Posterior vena cava (tissue), 2 donors: ENCODE measurements at regions of chr16 and their contacts with region 1.

Region 1: GRCh38 chr16:83418565-83418964 is 389.2 kb upstream of the HSBP1 start:
- DNase-seq: no peak

Region 2: DNA sequence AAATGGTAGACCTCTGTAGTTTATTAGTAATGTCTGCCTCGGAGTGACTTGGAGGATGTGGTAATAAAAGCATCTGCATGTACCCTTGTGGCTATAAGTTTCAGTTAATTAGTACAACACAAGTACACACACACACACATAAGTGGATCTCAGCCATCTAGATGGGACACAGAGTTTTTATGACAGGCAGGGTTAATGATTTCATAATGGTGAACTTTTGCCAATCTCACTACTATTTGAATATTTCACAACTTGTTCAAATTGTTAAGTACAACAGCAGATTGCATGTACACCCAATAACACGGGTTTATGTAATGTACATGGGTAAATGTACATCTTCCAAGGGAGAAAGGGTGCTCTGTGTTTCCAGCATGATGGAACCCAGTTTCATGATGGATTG is 122.1 kb before region 1 on chr16:
- intact Hi-C with region 1: loop called in 1 of 2 experiments (anchors 5 kb)
- DNase-seq: no peak

Region 3: DNA sequence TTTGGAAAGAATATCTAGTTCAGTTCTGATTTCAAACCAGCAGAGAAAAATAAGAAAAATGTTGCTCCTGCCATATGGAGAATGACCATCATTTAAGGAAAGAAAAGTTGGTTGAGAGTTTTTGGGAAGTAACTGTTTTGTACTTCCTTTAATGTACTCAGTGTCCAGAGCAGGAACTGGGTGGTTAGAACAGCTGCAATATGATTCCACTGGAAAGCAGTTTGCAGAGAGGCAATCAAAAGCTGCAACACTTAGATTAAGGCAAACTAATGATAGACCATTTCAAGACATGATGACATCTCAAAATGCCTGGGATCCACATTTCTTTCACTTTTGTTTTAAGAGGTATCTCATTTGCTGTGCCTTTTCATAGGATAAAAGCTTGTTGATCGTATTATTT is 75.9 kb after region 1 on chr16:
- intact Hi-C with region 1: no loop called
- DNase-seq: no peak